Naive thymus-derived CD4-positive, alpha-beta T cell (primary cell): ENCODE measurements at regions of chr2 and their contacts with region 1.

Region 1: GRCh38 chr2:202265467-202266277 is at the start of gene NOP58:
- DNase-seq: peak; percentile 69 to 96 (median 93)
- ATAC-seq: peak; percentile 90
- H3K4me3 ChIP-seq: peak within 1 kb of the TSS; percentile 93
- H3K4me3 Mint-ChIP-seq: peak within 1 kb of the TSS in 9 of 10 donors; percentile 53 to 71 (median 64)
- H3K27ac ChIP-seq: peak within 1 kb of the TSS; percentile 92
- H3K27ac Mint-ChIP-seq: peak within 1 kb of the TSS in 6 of 9 donors; percentile 4 to 83 (median 76)
- H3K4me1 ChIP-seq: peaks cover 17 to 34% of the 10 kb centered on the region in 2 donors
- H3K4me1 Mint-ChIP-seq: peaks cover 11 to 27% (median 21%) of the 10 kb centered on the region in 7 donors
- H3K27me3 ChIP-seq: no peaks in the 10 kb centered on the region
- H3K27me3 Mint-ChIP-seq: no peaks in the 10 kb centered on the region
- total RNA-seq, gene NOP58: 105 to 259 (median 110) TPM

Region 2: GRCh38 chr2:200811336-200812121 is 1454.1 kb before region 1 on chr2 and contains the start of gene BZW1:
- CTCF ChIA-PET with region 1: no interaction called
- POLR2A ChIA-PET with region 1: no interaction called
- intact Hi-C with region 1: loop called (anchors 1 to 5 kb)
- DNase-seq: peak; percentile 92 to 99 (median 98)
- ATAC-seq: peak; percentile 91
- H3K4me3 ChIP-seq: peak within 1 kb of the TSS; percentile 89
- H3K4me3 Mint-ChIP-seq: peak within 1 kb of the TSS; percentile 89 to 99 (median 98)
- H3K27ac ChIP-seq: peak within 1 kb of the TSS; percentile 99
- H3K27ac Mint-ChIP-seq: peak within 1 kb of the TSS; percentile 91 to 99 (median 98)
- H3K4me1 ChIP-seq: peaks cover 19 to 24% of the 10 kb centered on the region in 2 donors
- H3K4me1 Mint-ChIP-seq: peaks cover 30 to 56% (median 48%) of the 10 kb centered on the region in 7 donors
- H3K27me3 ChIP-seq: no peaks in the 10 kb centered on the region
- H3K27me3 Mint-ChIP-seq: peaks cover 0 to 2% (median 0%) of the 10 kb centered on the region in 5 donors
- total RNA-seq, gene BZW1: 127 to 246 (median 207) TPM

Region 3: DNA sequence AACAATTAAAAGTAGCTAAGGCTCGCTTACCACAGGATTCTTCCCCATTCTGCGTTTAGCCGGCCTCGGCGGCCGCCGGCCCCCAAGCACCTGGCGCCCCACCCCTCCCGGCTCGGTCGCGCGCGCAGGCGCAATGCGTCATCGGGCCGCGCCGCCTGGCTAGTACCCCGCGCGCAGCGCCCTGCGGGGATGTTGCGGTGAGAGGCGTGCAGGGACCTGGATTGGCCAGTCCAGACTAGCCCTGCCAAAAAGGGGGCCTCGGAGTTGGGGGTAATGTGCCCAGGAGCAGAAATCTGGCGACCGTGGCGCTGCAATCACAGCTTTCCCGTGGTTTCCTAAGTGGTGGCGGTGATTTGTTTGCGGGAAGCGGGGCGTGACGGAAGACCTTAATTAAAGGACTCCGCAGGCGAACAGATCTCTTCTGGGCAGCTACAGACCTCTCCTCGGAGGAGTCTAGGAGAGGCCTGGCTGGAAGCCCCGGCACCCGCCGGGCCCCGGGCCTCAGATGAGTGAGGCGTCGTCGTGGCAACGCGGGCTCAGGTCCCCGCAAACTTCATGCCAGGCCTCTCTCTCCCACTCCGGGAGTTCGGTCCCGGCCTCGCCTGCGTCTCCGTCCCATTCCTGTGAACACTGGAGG is 623.0 kb before region 1 on chr2:
- CTCF ChIA-PET with region 1: no interaction called
- POLR2A ChIA-PET with region 1: no interaction called
- intact Hi-C with region 1: loop called (anchors 1 to 5 kb)
- DNase-seq: peak; percentile 81 to 94 (median 92)
- ATAC-seq: peak; percentile 94
- H3K4me3 ChIP-seq: peak overlapping the region; percentile 95
- H3K4me3 Mint-ChIP-seq: peak overlapping the region; percentile 86 to 99 (median 96)
- H3K27ac ChIP-seq: peak overlapping the region; percentile 87
- H3K27ac Mint-ChIP-seq: peak overlapping the region; percentile 76 to 100 (median 97)
- H3K4me1 ChIP-seq: peaks cover 3 to 5% of the 10 kb centered on the region in 2 donors
- H3K4me1 Mint-ChIP-seq: peaks cover 5 to 21% (median 12%) of the 10 kb centered on the region in 7 donors
- H3K27me3 ChIP-seq: no peaks in the 10 kb centered on the region
- H3K27me3 Mint-ChIP-seq: peaks cover 0 to 4% (median 0%) of the 10 kb centered on the region in 5 donors

Region 4: GRCh38 chr2:202033321-202034248 is 232.1 kb before region 1 on chr2 and contains the start of gene FZD7:
- CTCF ChIA-PET with region 1: no interaction called
- POLR2A ChIA-PET with region 1: no interaction called
- intact Hi-C with region 1: loop called (anchors 1 kb)
- DNase-seq: peak; percentile 70 to 87 (median 81)
- ATAC-seq: peak; percentile 92
- H3K4me3 ChIP-seq: peak within 1 kb of the TSS; percentile 91
- H3K4me3 Mint-ChIP-seq: peak within 1 kb of the TSS in 9 of 10 donors; percentile 87 to 96 (median 92)
- H3K27ac ChIP-seq: peak within 1 kb of the TSS; percentile 44
- H3K27ac Mint-ChIP-seq: peak within 1 kb of the TSS in 8 of 9 donors; percentile 46 to 83 (median 72)
- H3K4me1 ChIP-seq: peaks cover 9 to 11% of the 10 kb centered on the region in 2 donors
- H3K4me1 Mint-ChIP-seq: peaks cover 6 to 17% (median 14%) of the 10 kb centered on the region in 7 donors
- H3K27me3 ChIP-seq: peaks cover 6 to 22% of the 10 kb centered on the region in 2 donors
- H3K27me3 Mint-ChIP-seq: peaks cover 0 to 45% (median 7%) of the 10 kb centered on the region in 5 donors
- total RNA-seq, gene FZD7: 0.27 to 0.99 (median 0.43) TPM

Region 5: DNA sequence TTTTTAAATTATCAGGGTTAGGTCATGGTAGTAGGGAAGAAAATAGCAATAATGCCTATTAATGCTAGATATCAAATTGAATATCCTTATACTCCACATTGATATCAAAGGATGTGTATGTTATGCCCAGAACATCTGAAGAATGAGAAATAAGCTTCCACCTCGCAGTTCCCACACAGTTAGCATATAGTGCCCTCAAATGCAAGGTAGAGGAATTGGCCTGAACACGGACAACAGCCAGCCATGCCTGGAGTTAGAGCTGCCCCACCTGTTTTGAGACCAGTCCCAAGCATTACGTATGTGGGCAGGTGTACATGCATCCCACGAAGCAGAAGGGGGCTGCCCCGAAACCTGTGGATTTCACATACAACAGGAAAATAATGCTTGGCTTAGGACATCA is 106.9 kb before region 1 on chr2:
- CTCF ChIA-PET with region 1: no interaction called
- POLR2A ChIA-PET with region 1: no interaction called
- intact Hi-C with region 1: no loop called
- DNase-seq: no peak
- ATAC-seq: no peak
- H3K4me3 ChIP-seq: no peak overlapping the region
- H3K4me3 Mint-ChIP-seq: no peak overlapping the region
- H3K27ac ChIP-seq: no peak overlapping the region
- H3K27ac Mint-ChIP-seq: no peak overlapping the region
- H3K4me1 ChIP-seq: no peaks in the 10 kb centered on the region
- H3K4me1 Mint-ChIP-seq: peaks cover 0 to 3% (median 0%) of the 10 kb centered on the region in 7 donors
- H3K27me3 ChIP-seq: no peaks in the 10 kb centered on the region
- H3K27me3 Mint-ChIP-seq: peaks cover 0 to 11% (median 8%) of the 10 kb centered on the region in 5 donors

Region 6: DNA sequence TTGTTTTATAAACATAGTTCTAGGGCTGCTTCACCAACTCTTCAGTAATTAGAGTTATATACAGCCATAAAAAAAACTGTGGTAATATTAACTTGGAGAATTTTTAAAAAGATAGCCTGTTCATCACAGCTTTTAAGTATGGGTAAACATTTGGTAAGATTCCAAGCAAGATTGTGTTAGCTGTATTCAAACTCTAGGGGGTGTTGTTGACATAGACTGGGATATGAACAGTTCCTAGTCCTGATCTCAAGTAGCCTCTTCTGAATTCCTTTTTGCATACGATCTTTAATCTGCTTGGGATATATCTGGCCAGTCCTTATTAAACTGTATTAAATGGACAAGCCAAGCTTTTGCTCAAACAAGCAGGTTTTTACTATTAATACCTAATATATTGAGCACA is 13.3 kb after region 1 on chr2:
- CTCF ChIA-PET with region 1: interaction called, 3 read pairs
- POLR2A ChIA-PET with region 1: interaction called, 8 read pairs
- intact Hi-C with region 1: loop called (anchors 1 kb)
- DNase-seq: no peak
- ATAC-seq: peak; percentile 60
- H3K4me3 ChIP-seq: no peak overlapping the region
- H3K4me3 Mint-ChIP-seq: no peak overlapping the region
- H3K27ac ChIP-seq: peak overlapping the region; percentile 21
- H3K27ac Mint-ChIP-seq: peak overlapping the region in 4 of 9 donors; percentile 2 to 85 (median 50)
- H3K4me1 ChIP-seq: no peaks in the 10 kb centered on the region
- H3K4me1 Mint-ChIP-seq: peaks cover 4 to 29% (median 14%) of the 10 kb centered on the region in 7 donors
- H3K27me3 ChIP-seq: no peaks in the 10 kb centered on the region
- H3K27me3 Mint-ChIP-seq: no peaks in the 10 kb centered on the region

Region 7: DNA sequence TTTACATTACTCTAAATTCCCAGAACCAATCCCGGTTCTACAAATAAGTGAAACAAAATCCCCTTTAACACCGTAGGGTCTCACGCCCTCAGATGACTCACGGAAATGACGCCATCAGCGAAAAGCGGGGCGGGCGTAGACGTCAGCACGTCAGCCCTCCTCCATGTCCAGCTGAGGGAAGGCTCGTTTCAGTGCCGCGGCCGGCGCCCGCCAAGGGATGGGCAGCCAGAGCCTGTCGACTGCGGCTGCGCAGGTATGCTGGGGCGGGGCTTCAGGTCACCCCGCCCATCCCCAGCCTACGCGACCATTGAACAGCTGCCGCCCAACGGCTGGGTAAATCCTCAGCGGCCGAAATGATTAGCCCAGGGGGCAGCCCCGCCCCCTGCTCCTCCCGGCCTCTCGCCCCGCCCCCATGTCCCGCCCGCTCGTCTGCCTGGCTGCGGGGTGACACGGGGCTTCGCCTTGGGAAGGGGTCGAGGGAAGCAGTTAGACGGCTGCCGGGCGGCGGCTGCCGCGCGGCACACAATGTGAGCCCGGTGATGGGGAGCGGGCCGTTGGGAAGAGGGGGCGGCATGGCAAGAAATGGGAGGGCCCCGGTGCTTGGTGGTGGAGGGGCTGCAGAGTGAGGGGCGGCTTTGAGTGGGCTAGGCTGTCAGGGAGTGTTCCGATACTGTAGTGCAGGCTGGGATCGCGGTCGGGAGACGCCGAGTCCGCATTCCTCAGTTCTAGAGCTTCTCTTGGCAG is 749.0 kb after region 1 on chr2 and contains the start of gene NBEAL1:
- CTCF ChIA-PET with region 1: no interaction called
- POLR2A ChIA-PET with region 1: no interaction called
- intact Hi-C with region 1: loop called (anchors 1 to 2 kb)
- DNase-seq: peak; percentile 88 to 99 (median 90)
- ATAC-seq: peak; percentile 95
- H3K4me3 ChIP-seq: peak within 1 kb of the TSS; percentile 92
- H3K4me3 Mint-ChIP-seq: peak within 1 kb of the TSS; percentile 90 to 97 (median 95)
- H3K27ac ChIP-seq: peak within 1 kb of the TSS; percentile 92
- H3K27ac Mint-ChIP-seq: peak within 1 kb of the TSS; percentile 84 to 98 (median 94)
- H3K4me1 ChIP-seq: peaks cover 5 to 14% of the 10 kb centered on the region in 2 donors
- H3K4me1 Mint-ChIP-seq: peaks cover 18 to 48% (median 41%) of the 10 kb centered on the region in 7 donors
- H3K27me3 ChIP-seq: no peaks in the 10 kb centered on the region
- H3K27me3 Mint-ChIP-seq: peaks cover 0 to 19% (median 0%) of the 10 kb centered on the region in 5 donors
- total RNA-seq, gene NBEAL1: 11.6 to 15.9 (median 12.6) TPM